Cardiac septum (tissue), 1 donor: ENCODE measurements at regions of chr17 and their contacts with region 1.

Region 1: DNA sequence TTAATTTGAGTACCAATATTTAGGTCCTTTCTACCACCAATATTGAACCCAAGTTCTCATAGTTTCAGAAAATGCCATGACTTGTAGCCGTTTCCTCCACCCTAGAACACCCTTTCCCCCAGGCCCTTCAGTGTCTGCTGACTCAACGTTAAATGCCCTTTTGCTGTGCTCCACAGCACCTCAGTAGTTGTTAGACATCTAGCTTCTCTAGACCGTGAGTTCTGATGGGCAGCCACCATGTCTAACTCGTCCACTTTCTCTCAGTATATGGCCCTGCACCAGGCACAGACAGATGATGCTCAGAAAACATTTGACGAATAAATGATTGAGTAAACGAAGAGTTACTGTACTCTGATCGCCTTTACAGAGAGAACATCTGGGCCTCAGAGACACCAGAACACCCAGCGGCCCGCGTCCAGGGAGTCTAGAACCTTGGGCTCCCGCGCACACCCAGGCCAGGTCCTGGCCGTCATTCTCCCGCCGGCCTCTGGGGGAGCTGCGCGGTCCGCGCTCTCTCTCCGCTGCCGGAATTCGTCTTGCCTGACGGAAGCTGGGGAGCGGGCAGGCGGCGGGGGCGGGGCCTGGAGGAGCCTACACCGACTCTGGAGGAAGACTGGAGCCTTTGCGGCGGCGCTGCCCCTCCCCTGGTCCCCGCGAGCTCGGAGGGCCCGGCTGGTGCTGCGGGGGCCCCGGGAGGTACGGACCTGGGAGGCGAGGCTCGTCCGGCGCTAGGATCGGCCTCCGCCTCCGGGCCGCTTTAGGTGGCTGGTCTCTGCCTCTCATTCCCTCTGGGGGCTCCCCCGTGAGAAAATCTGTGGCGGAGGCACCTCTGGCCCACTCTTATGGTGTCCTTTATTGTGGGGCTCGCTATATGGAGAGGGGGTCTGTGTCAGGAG is at the start of gene NKIRAS2:
- DNase-seq: peak; percentile 98
- total RNA-seq, gene NKIRAS2: 50.7 TPM

Region 2: GRCh38 chr17:42101513-42102319 is 82.0 kb after region 1 on chr17:
- intact Hi-C with region 1: loop called (anchors 2 kb)
- DNase-seq: no peak

Region 3: GRCh38 chr17:42536048-42536371 is 516.3 kb after region 1 on chr17 and contains the start of gene NAGLU:
- intact Hi-C with region 1: loop called (anchors 10 kb)
- DNase-seq: peak; percentile 99
- total RNA-seq, gene NAGLU: 12.1 TPM